Dorsolateral prefrontal cortex (tissue), 120 donors: ENCODE measurements at regions of chr12 and their contacts with region 1.

Region 1: DNA sequence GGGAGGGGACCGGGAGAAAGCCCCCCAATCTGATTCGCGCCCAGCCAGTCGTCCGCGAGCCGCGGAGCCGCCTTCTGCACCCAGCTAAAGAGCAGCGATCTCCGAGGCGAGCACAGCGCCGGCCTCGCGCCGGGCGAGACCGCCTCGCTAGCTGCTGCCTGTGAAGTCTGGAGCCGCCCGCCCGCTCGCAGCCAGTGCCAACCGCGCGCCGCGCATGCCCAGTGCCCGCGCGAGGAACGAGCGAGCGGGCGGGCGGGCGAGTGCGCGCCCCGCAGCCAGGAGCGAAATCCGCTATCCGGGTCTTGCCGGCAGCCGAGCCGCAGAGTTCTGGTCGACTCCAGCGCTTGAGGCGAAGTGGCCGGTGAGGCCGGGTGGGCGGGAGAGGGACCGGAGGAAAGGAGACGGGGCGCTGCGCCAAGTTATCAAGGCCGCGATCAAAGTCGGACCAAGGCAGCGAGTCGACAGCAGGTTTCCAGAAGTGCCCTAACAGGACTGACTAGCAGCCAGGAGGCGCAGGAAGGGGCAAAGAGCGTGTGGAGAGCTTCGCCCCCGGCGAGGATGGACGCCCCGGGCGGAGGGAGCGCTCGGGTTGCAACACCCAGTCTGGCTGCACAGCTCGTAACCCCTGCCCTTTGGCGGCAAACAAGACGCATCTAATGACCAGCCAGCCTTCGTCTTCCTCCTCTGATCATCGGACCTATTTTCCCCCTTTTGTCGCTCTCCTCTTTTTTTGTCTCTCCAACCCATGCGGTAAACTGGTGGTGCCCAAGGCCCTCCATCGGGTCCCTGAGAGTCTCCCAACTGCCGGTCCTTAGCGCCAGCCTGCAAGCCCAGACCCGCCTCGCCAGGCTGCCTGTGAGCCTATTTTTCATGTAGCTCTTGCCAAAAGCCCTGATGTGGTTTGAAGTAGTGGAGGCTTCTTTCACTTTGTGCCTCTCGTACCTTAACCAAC is at the start of gene EPS8:
- DNase-seq: peak; percentile 83 to 94 (median 88)
- H3K4me3 ChIP-seq: peak within 1 kb of the TSS; percentile 64 to 95 (median 84)
- H3K27ac ChIP-seq: peak within 1 kb of the TSS; percentile 73 to 97 (median 90)
- H3K27me3 ChIP-seq: no peaks in the 10 kb centered on the region
- CTCF ChIP-seq: peak in 36 of 56 donors; percentile 5 to 58 (median 28)
- total RNA-seq, gene EPS8: 15.8 to 61.8 (median 29.0) TPM

Region 2: DNA sequence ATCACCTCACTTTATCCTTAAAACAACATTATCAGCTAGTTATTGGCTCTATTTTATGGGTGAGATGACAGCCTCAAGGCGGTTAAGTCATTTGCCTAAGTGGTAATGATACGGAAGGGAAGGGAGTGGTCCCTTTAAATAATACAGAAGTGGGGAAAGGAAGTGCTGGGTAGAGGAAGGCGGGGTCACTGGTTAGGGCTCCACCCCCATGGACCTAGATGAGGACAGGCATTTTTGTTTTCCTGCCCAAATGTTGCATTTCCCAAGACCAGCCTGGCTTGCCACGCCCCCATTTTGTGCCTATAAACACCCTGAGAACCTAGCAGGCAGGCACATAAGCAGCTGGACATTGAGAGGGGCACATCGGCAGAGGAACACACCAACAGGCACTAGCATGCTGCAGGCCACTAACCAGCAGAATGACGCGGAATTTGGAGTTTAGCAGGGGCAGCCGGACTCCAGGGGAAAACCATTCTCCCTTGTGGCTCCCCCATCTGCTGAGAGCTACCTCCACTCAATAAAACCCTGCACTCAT is 101.2 kb before region 1 on chr12:
- intact Hi-C with region 1: loop called in 1 of 2 experiments (anchors 2 kb)
- DNase-seq: peak; percentile 14 to 76 (median 64)
- H3K4me3 ChIP-seq: peak overlapping the region; percentile 3 to 69 (median 49)
- H3K27ac ChIP-seq: peak overlapping the region; percentile 34 to 91 (median 81)
- H3K27me3 ChIP-seq: no peaks in the 10 kb centered on the region
- CTCF ChIP-seq: no peak

Region 3: DNA sequence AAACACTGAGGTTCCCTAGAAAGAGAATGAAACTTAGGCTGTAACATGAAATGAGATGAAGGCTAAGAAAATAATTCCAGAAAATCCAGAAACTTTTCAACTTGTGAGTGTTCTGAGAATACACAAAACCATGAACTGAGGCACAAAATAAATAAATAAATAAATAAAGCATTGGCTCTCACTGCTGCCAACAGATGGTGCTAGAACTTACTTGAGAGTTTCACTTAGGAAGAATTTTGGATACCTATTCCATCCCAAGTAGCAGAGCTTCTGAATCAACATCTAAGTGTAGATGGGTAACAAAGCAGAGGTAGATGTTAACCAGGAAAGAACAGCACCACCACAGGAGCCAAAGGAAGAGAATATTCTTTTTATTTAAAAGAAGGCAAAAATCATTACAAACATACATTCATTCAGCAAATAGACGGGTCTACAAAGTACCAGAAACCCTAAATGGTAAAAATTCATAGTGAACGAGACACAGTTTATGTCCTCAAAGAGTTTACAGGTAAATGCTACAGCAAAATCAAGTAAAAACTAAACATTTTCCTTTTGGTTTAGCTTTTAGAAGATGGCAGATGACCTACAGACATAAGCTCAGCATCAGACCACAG is 17.0 kb before region 1 on chr12:
- intact Hi-C with region 1: no loop called
- DNase-seq: no peak
- H3K4me3 ChIP-seq: no peak overlapping the region
- H3K27ac ChIP-seq: peak overlapping the region in 7 of 59 donors; percentile 7 to 62 (median 44)
- H3K27me3 ChIP-seq: no peaks in the 10 kb centered on the region
- CTCF ChIP-seq: peak in 50 of 56 donors; percentile 11 to 64 (median 44)